ENCODE measurements at regions of chr19 and their contacts with region 1.

Region 1: GRCh38 chr19:52336117-52336790 is at the start of gene ZNF610:
- DNase-seq: peak; percentile 55
- H3K4me3 ChIP-seq: peak within 1 kb of the TSS; percentile 48 to 75 (median 58)
- H3K27ac ChIP-seq: no peak within 1 kb of the TSS
- H3K4me1 ChIP-seq: no peaks in the 10 kb centered on the region
- H3K27me3 ChIP-seq: no peaks in the 10 kb centered on the region
- CTCF ChIP-seq: no peak
- total RNA-seq, gene ZNF610: 0.64 to 4.8 TPM

Region 2: GRCh38 chr19:53068834-53069233 is 732.6 kb after region 1 on chr19:
- CTCF ChIA-PET with region 1: no interaction called
- dilution Hi-C with region 1: no loop called
- in situ Hi-C with region 1: no loop called
- intact Hi-C with region 1: loop called (anchors 10 kb)
- DNase-seq: no peak
- H3K4me3 ChIP-seq: no peak overlapping the region
- H3K27ac ChIP-seq: no peak overlapping the region
- H3K4me1 ChIP-seq: no peaks in the 10 kb centered on the region
- H3K27me3 ChIP-seq: no peaks in the 10 kb centered on the region
- CTCF ChIP-seq: no peak